Gastrocnemius medialis (tissue), 4 donors: ENCODE measurements at regions of chr12 and their contacts with region 1.

Region 1: GRCh38 chr12:46124848-46125619 is 134.7 kb upstream of the SCAF11 start:
- DNase-seq: peak in 1 of 2 donors; percentile 41
- ATAC-seq: peak; percentile 88 to 94
- H3K4me3 ChIP-seq: peak overlapping the region in 1 of 4 donors; percentile 18
- H3K27ac ChIP-seq: no peak overlapping the region
- H3K4me1 ChIP-seq: no peaks in the 10 kb centered on the region
- H3K27me3 ChIP-seq: no peaks in the 10 kb centered on the region
- CTCF ChIP-seq: peak; percentile 59 to 85 (median 65)
- POLR2A ChIP-seq: no peak

Region 2: DNA sequence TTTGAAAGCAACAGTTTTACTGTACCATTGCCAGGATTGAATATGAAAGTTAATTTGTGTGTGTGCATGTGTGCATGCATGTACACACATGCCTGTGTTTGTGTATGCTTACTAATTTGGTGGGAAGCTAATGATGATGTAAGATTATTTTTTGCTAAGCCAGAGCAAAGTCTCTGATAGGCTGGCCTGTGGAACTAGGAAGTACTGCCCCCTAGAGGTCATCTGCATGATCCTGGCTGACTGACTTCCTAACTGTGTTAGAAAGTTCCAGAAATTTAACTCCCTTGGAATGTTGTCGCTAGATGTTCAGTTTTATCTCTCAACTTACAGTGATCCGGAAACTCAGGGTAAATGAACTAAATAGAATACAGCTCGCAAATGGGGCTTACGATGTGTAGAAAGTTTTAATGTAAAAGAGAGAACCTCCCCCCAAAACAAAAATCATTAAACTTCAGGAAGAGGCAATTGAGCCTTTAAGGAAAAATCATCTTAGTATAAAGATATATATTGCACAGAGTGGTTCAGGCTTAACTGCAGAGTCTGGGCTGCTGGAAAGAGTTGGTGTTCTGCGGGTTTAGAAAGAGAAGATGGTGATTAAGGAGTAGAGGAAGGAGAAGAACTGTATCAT is 178.1 kb after region 1 on chr12:
- in situ Hi-C with region 1: loop called in 2 of 4 experiments (anchors 10 kb)
- intact Hi-C with region 1: loop called (anchors 2 kb)
- DNase-seq: peak in 1 of 2 donors; percentile 19
- ATAC-seq: peak; percentile 39 to 84
- H3K4me3 ChIP-seq: no peak overlapping the region
- H3K27ac ChIP-seq: no peak overlapping the region
- H3K4me1 ChIP-seq: no peaks in the 10 kb centered on the region
- H3K27me3 ChIP-seq: no peaks in the 10 kb centered on the region
- CTCF ChIP-seq: peak; percentile 44 to 68 (median 51)
- POLR2A ChIP-seq: no peak

Region 3: GRCh38 chr12:46439793-46440511 is 314.9 kb after region 1 on chr12:
- in situ Hi-C with region 1: no loop called
- intact Hi-C with region 1: no loop called
- DNase-seq: no peak
- ATAC-seq: no peak
- H3K4me3 ChIP-seq: no peak overlapping the region
- H3K27ac ChIP-seq: no peak overlapping the region
- H3K4me1 ChIP-seq: peaks cover 16 to 18% of the 10 kb centered on the region in 2 donors
- H3K27me3 ChIP-seq: no peaks in the 10 kb centered on the region
- CTCF ChIP-seq: no peak
- POLR2A ChIP-seq: no peak

Region 4: DNA sequence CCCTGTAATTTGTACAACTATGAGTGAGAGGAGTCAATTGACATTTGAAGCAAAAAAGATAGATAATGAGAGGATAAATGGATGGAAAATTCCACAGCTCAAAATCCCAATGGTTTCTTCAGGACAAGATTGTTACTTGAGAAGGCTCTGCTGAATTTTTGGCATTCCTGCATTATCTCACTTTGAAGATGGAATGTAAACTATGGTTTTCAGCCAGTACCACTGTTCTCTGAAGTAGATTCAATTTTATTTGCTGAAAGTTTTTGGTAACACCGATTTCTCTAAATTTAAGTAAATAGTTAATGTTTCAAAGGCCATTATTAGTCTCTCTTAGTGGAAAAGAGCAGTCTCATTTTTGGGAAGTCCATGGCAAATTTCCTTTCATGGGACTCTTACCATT is 369.4 kb after region 1 on chr12:
- in situ Hi-C with region 1: no loop called
- intact Hi-C with region 1: no loop called
- DNase-seq: no peak
- ATAC-seq: no peak
- H3K4me3 ChIP-seq: no peak overlapping the region
- H3K27ac ChIP-seq: peak overlapping the region in 2 of 4 donors; percentile 12 to 49
- H3K4me1 ChIP-seq: peaks cover 34 to 38% of the 10 kb centered on the region in 2 donors
- H3K27me3 ChIP-seq: no peaks in the 10 kb centered on the region
- CTCF ChIP-seq: no peak
- POLR2A ChIP-seq: no peak

Region 5: GRCh38 chr12:47021298-47021697 is 896.3 kb after region 1 on chr12:
- in situ Hi-C with region 1: loop called in 1 of 4 experiments (anchors 25 kb)
- intact Hi-C with region 1: loop called (anchors 10 kb)
- DNase-seq: no peak
- ATAC-seq: peak; percentile 56 to 58
- H3K4me3 ChIP-seq: no peak overlapping the region
- H3K27ac ChIP-seq: no peak overlapping the region
- H3K4me1 ChIP-seq: no peaks in the 10 kb centered on the region
- H3K27me3 ChIP-seq: no peaks in the 10 kb centered on the region
- CTCF ChIP-seq: peak; percentile 45 to 69 (median 47)
- POLR2A ChIP-seq: no peak